B cell (primary cell): ENCODE measurements at regions of chr10 and their contacts with region 1.

Region 1: DNA sequence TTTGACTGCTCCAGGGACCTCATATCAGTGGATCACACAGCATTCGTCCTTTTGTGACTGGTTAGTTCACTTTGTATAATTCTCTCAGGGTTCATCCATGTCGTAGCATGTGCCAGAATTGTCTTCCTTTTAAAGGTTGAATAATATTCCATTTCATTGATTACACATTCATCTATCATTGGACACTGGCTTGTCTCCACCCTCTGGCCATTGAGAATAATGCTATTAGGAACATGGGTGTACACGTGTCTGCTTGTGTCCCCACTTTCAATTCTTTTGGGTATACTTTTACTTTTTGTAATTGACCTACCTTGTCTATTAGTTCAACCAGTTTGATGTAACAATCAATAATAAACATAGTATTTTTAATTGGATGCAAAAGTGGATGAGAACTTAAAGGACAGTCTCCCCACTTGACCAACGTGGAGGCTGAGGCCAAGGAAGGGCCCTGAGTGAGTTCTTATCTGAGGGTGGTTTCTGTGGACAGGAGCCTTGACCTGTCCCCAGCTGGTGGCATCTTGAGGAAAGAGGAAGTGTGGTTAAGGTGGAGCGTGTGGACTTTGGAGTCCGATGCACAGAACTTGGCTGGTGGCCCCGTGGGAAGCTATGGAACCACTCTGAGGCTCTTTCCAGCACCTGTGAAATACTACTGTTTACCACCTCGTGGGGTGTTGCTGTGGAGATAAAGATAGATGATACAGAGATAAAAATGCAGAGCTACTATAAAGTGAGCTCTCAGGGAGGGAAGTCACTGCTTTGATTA is 16.6 kb downstream of the WDFY4 start:
- DNase-seq: peak; percentile 62
- ATAC-seq: peak; percentile 37
- H3K4me3 ChIP-seq: no peak overlapping the region
- H3K4me3 Mint-ChIP-seq: peak overlapping the region; percentile 58
- H3K27ac ChIP-seq: peak overlapping the region in 1 of 2 donors; percentile 66
- H3K27ac Mint-ChIP-seq: peak overlapping the region; percentile 88
- H3K4me1 ChIP-seq: peaks cover 87 to 98% of the 10 kb centered on the region in 2 donors
- H3K4me1 Mint-ChIP-seq: peaks cover 96% of the 10 kb centered on the region
- H3K27me3 ChIP-seq: no peaks in the 10 kb centered on the region
- H3K27me3 Mint-ChIP-seq: no peaks in the 10 kb centered on the region
- CTCF ChIP-seq: peak; percentile 70

Region 2: DNA sequence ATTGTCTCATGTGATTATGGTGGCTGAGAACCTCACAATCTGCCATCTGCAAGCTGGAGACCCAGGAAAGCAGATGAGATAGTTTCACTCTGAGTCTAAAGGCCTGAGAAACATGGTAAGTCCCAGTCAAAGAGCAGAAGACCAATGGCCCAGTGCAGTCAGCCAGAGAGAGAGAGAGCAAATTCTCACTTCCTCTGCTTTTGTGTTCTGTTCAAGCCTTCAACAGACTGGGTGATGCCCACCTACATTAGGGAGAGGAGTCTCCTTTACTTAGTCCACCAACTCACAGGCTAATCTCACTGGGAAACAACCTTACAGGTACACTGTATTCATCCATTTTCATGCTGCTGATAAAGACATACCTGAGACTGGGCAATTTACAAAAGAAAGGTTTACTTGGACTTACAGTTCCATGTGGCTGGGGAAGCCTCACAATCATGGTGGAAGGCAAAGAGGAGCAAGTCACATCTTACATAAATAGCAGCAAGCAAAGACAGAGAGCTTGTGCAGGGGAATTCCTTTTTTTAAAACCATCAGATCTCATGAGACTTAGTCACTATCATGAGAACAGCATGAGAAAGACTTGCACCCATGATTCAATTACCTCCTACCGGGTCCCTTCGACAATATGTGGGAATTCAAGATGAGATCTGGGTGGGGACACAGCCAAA is 422.1 kb before region 1 on chr10:
- CTCF ChIA-PET with region 1: no interaction called
- POLR2A ChIA-PET with region 1: no interaction called
- intact Hi-C with region 1: no loop called
- DNase-seq: peak; percentile 18
- ATAC-seq: peak; percentile 60
- H3K4me3 ChIP-seq: no peak overlapping the region
- H3K4me3 Mint-ChIP-seq: peak overlapping the region; percentile 30
- H3K27ac ChIP-seq: no peak overlapping the region
- H3K27ac Mint-ChIP-seq: peak overlapping the region; percentile 78
- H3K4me1 ChIP-seq: no peaks in the 10 kb centered on the region
- H3K4me1 Mint-ChIP-seq: peaks cover 19% of the 10 kb centered on the region
- H3K27me3 ChIP-seq: no peaks in the 10 kb centered on the region
- H3K27me3 Mint-ChIP-seq: no peaks in the 10 kb centered on the region
- CTCF ChIP-seq: no peak

Region 3: DNA sequence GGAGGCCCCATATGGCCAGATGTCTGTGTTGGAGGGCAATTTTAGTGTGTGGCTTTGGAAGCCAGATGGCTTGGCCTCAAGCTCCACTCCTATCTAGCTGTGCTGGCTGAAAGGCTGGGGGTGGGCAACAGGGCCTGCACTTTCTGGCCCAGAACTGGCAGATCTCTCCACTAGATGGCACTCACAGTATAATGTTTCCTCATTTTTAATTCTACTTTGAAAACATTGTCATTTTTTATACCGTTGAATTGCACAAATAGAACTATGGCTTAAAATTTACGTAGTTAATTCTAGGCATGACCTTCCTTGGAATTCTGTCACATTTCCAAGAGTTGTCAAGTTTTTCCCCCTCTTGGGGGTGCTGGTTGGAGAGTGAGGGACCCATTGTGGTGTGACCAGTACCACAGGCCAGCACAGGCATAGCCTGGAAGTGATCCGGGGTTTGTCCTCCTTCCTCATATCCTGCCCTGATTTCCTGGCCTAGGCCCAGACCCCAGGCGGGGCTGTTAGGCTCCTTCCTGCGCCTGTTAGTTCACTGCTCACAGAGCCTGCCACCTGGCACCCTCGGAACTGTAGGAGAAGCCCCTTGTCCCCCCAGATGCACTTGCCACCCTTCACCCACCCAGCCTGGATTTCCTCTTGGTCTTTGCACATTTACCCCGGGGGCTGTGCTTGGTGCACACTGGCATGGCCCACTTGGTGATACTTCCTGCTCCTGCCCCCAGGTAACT is 149.3 kb before region 1 on chr10:
- CTCF ChIA-PET with region 1: interaction called, 16 read pairs
- POLR2A ChIA-PET with region 1: no interaction called
- intact Hi-C with region 1: loop called (anchors 5 kb)
- DNase-seq: peak; percentile 79
- ATAC-seq: peak; percentile 82
- H3K4me3 ChIP-seq: no peak overlapping the region
- H3K4me3 Mint-ChIP-seq: no peak overlapping the region
- H3K27ac ChIP-seq: no peak overlapping the region
- H3K27ac Mint-ChIP-seq: no peak overlapping the region
- H3K4me1 ChIP-seq: peaks cover 10 to 13% of the 10 kb centered on the region in 2 donors
- H3K4me1 Mint-ChIP-seq: peaks cover 14% of the 10 kb centered on the region
- H3K27me3 ChIP-seq: peaks cover 0 to 6% (median 0%) of the 10 kb centered on the region in 4 experiments
- H3K27me3 Mint-ChIP-seq: peaks cover 7% of the 10 kb centered on the region
- CTCF ChIP-seq: peak; percentile 94

Region 4: DNA sequence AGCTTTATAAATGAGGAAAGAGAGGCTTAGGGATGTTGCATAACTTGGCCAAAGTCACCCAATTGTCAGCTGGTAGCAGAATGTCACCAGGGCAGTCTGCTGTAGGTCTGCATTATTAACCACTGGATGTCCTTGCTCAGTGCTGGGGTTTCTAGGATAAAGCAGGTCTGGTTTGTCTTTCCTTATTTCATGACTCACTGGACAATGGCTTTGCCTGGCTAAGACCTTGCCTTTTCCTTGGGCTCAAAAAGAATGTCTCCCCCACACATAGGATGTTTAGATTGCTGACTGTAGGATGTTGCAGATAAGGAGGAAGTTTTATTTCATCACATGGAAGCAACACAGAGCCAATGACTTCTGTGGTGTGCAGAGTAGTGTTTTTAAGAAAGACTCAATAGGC is 12.8 kb after region 1 on chr10:
- CTCF ChIA-PET with region 1: interaction called, 29 read pairs
- POLR2A ChIA-PET with region 1: no interaction called
- intact Hi-C with region 1: no loop called
- DNase-seq: no peak
- ATAC-seq: no peak
- H3K4me3 ChIP-seq: no peak overlapping the region
- H3K4me3 Mint-ChIP-seq: no peak overlapping the region
- H3K27ac ChIP-seq: peak overlapping the region in 1 of 2 donors; percentile 44
- H3K27ac Mint-ChIP-seq: peak overlapping the region; percentile 16
- H3K4me1 ChIP-seq: peaks cover 3 to 16% of the 10 kb centered on the region in 2 donors
- H3K4me1 Mint-ChIP-seq: peaks cover 66% of the 10 kb centered on the region
- H3K27me3 ChIP-seq: no peaks in the 10 kb centered on the region
- H3K27me3 Mint-ChIP-seq: no peaks in the 10 kb centered on the region
- CTCF ChIP-seq: no peak

Region 5: GRCh38 chr10:48745662-48746245 is 44.4 kb after region 1 on chr10:
- CTCF ChIA-PET with region 1: interaction called, 3 read pairs
- POLR2A ChIA-PET with region 1: no interaction called
- intact Hi-C with region 1: loop called (anchors 5 kb)
- DNase-seq: no peak
- ATAC-seq: no peak
- H3K4me3 ChIP-seq: no peak overlapping the region
- H3K4me3 Mint-ChIP-seq: no peak overlapping the region
- H3K27ac ChIP-seq: no peak overlapping the region
- H3K27ac Mint-ChIP-seq: no peak overlapping the region
- H3K4me1 ChIP-seq: peaks cover 15 to 19% of the 10 kb centered on the region in 2 donors
- H3K4me1 Mint-ChIP-seq: peaks cover 46% of the 10 kb centered on the region
- H3K27me3 ChIP-seq: no peaks in the 10 kb centered on the region
- H3K27me3 Mint-ChIP-seq: no peaks in the 10 kb centered on the region
- CTCF ChIP-seq: no peak